Lower leg skin (tissue), 4 donors: ENCODE measurements at regions of chr9 and their contacts with region 1.

Region 1: DNA sequence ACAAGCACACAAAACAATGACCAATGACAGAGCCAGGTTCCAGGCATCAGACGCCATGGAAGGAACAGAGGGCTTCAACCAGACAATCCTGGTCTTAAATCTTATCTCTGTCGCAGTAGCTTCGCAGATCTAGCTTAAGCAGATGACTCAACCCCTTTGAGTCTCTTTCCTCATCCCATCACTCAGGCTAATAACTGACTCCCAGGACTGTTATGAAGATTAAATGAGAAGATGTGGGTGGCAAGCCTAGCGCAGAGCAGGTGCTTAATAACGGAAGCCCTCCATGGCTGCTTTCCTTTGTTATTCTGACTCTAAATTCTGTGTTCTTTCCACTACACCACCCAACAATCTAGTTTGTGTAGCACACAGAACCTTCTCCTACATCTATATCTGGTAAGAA is 110.9 kb downstream of the SLC24A2 start:
- DNase-seq: no peak
- H3K4me3 ChIP-seq: no peak overlapping the region
- CTCF ChIP-seq: no peak
- POLR2A ChIP-seq: no peak

Region 2: GRCh38 chr9:19618816-19619215 is 59.1 kb before region 1 on chr9:
- intact Hi-C with region 1: loop called (anchors 10 kb)
- DNase-seq: no peak
- H3K4me3 ChIP-seq: no peak overlapping the region
- CTCF ChIP-seq: no peak
- POLR2A ChIP-seq: no peak